ENCODE measurements at regions of chr20 and their contacts with region 1.

Region 1: DNA sequence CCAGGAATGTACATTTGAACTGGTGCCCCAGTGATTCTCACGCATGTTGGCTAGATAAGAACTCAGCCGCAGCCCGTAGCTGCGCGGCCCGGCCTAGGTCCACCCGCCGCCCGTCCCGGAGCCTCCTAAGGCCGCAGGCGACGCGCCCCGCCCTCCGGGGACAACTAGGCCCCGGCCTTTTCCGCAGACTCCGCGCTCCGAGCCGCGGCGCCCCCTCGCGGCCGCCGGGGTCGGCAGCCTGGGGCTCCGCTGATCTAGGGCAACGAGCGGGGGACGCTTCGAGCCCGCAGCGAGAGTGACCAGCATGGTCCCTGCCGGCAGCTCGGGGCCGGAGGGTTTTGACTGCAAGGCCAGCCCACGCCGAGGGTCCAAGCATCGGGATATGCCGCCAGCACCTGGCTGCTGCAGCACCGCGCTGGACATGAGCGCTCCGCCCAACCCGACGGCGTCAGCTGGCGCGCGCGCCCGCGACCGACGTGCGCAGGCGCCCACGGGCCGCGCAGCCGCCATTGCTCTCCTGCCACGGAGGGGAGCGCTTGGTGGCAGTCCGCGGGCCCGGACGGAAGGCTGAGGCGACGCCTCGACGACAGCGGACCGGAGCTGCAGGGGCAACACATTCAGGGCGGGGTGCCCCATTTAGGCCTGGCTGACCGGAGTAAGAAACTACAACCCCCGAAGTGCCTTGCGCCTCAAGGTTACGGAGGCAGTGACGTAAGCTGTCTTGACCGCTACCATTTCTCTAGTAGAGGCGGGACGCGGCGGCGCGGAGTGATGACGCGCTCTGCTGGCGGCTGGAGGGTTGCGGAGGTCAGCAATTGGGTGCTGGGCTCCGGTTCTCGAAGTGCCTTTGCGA is at the start of gene AP5S1:
- DNase-seq: peak; percentile 97 to 98
- H3K4me3 ChIP-seq: peak within 1 kb of the TSS; percentile 100
- H3K4me3 Mint-ChIP-seq: peak within 1 kb of the TSS; percentile 92
- H3K27ac Mint-ChIP-seq: peak within 1 kb of the TSS; percentile 97
- H3K4me1 ChIP-seq: peaks cover 15% of the 10 kb centered on the region
- H3K4me1 Mint-ChIP-seq: peaks cover 7% of the 10 kb centered on the region
- H3K27me3 ChIP-seq: no peaks in the 10 kb centered on the region
- H3K27me3 Mint-ChIP-seq: no peaks in the 10 kb centered on the region
- CTCF ChIP-seq: peak; percentile 83 to 93
- total RNA-seq, gene AP5S1: 14.9 and 17.3 TPM in 2 replicates

Region 2: GRCh38 chr20:3786665-3787323 is 33.5 kb before region 1 on chr20 and contains the start of gene CENPB:
- CTCF ChIA-PET with region 1: interaction called, 27 read pairs
- POLR2A ChIA-PET with region 1: interaction called, 12 read pairs
- intact Hi-C with region 1: loop called (anchors 1 kb)
- DNase-seq: peak; percentile 86 to 98
- H3K4me3 ChIP-seq: peak within 1 kb of the TSS; percentile 89
- H3K4me3 Mint-ChIP-seq: peak within 1 kb of the TSS; percentile 74
- H3K27ac Mint-ChIP-seq: no peak within 1 kb of the TSS
- H3K4me1 ChIP-seq: peaks cover 29% of the 10 kb centered on the region
- H3K4me1 Mint-ChIP-seq: peaks cover 7% of the 10 kb centered on the region
- H3K27me3 ChIP-seq: no peaks in the 10 kb centered on the region
- H3K27me3 Mint-ChIP-seq: peaks cover 3% of the 10 kb centered on the region
- CTCF ChIP-seq: peak; percentile 66 to 95
- total RNA-seq, gene CENPB: 72.7 and 84.3 TPM in 2 replicates

Region 3: GRCh38 chr20:3795511-3796468 is 24.5 kb before region 1 on chr20 and contains the start of gene CDC25B:
- CTCF ChIA-PET with region 1: interaction called, 18 read pairs
- POLR2A ChIA-PET with region 1: interaction called, 4 read pairs
- intact Hi-C with region 1: loop called (anchors 1 kb)
- DNase-seq: peak; percentile 90 to 95
- H3K4me3 ChIP-seq: peak within 1 kb of the TSS; percentile 69
- H3K4me3 Mint-ChIP-seq: peak within 1 kb of the TSS; percentile 84
- H3K27ac Mint-ChIP-seq: peak within 1 kb of the TSS; percentile 93
- H3K4me1 ChIP-seq: peaks cover 36% of the 10 kb centered on the region
- H3K4me1 Mint-ChIP-seq: peaks cover 25% of the 10 kb centered on the region
- H3K27me3 ChIP-seq: no peaks in the 10 kb centered on the region
- H3K27me3 Mint-ChIP-seq: no peaks in the 10 kb centered on the region
- CTCF ChIP-seq: peak; percentile 49 to 68
- total RNA-seq, gene CDC25B: 59.0 and 66.7 TPM in 2 replicates

Region 4: GRCh38 chr20:3846740-3847428 is 26.6 kb after region 1 on chr20 and contains the start of gene MAVS:
- CTCF ChIA-PET with region 1: interaction called, 4 read pairs
- POLR2A ChIA-PET with region 1: interaction called, 16 read pairs
- intact Hi-C with region 1: loop called (anchors 2 kb)
- DNase-seq: peak; percentile 90 to 95
- H3K4me3 ChIP-seq: peak within 1 kb of the TSS; percentile 57
- H3K4me3 Mint-ChIP-seq: peak within 1 kb of the TSS; percentile 92
- H3K27ac Mint-ChIP-seq: peak within 1 kb of the TSS; percentile 94
- H3K4me1 ChIP-seq: peaks cover 12% of the 10 kb centered on the region
- H3K4me1 Mint-ChIP-seq: peaks cover 10% of the 10 kb centered on the region
- H3K27me3 ChIP-seq: no peaks in the 10 kb centered on the region
- H3K27me3 Mint-ChIP-seq: no peaks in the 10 kb centered on the region
- CTCF ChIP-seq: no peak
- total RNA-seq, gene MAVS: 49.3 and 56.4 TPM in 2 replicates

Region 5: DNA sequence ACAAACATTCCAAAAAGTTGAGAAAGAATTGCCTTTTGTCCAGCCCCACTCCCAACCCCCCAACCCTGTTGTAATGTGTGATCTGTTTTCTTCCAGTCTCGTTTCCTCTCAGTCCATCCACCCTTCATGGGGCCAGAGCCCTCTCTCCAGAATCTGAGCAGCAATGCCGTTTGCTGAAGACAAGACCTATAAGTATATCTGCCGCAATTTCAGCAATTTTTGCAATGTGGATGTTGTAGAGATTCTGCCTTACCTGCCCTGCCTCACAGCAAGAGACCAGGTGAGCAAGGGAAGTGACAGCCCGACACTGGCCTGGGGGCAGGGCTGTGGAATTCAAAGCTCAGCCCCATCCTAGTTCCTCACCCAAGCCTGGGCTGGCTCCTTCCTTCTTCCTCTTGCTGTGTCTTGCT is 34.2 kb after region 1 on chr20:
- CTCF ChIA-PET with region 1: interaction called, 7 read pairs
- POLR2A ChIA-PET with region 1: interaction called, 16 read pairs
- intact Hi-C with region 1: loop called (anchors 1 kb)
- DNase-seq: peak; percentile 72 to 83
- H3K4me3 ChIP-seq: no peak overlapping the region
- H3K4me3 Mint-ChIP-seq: peak overlapping the region; percentile 37
- H3K27ac Mint-ChIP-seq: peak overlapping the region; percentile 84
- H3K4me1 ChIP-seq: peaks cover 4% of the 10 kb centered on the region
- H3K4me1 Mint-ChIP-seq: peaks cover 11% of the 10 kb centered on the region
- H3K27me3 ChIP-seq: no peaks in the 10 kb centered on the region
- H3K27me3 Mint-ChIP-seq: no peaks in the 10 kb centered on the region
- CTCF ChIP-seq: no peak

Measured in Caco-2 (cell line).